ENCODE measurements at regions of chr2 and their contacts with region 1.

Region 1: DNA sequence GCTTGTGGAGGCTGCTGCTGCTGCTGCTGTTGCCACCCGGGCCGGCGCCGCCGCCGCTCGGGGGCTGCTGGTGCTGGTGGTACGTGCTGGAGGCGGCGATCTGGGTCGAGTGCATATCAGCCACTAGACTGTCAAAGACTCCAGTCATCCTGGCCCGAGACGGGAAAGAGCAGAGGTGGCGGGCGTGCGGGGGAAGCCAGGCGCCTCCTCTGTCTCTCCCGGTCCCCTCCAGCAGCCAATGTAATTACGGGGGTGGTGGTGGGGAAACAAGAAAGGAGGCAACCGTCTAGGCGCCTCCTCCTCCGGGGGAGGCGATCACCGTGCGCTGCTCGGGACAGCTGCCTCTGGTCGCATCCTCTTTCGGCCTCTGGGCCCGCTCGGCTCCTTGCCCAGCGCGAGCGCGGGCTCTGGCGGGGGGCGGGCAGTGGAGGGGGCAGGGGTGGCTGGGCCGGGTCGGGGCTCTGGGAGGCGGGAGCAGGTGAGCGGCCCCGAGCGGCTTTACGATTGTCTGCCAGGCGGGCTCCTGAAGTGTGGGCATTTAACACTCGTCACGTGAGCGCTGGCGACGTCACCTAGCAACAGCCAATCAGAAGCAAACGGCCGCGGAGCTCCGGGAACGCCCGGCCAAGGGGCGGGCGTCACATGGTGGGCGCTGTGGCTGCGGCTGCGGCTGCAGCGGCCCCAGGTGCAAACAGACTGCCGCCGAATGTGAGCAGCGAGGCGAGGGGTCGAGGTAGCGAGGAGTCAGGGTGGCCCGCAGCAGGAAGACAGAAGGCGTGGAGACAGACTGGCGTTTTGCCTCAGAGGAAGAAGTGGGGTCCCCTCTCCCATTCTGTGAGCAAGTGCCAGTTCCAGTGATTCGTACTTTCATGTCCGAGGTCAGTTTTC is at the start of gene DLX2:
- DNase-seq: peak; percentile 83
- ATAC-seq: peak; percentile 56
- H3K4me3 Mint-ChIP-seq: peak within 1 kb of the TSS; percentile 77
- H3K27ac Mint-ChIP-seq: peak within 1 kb of the TSS; percentile 73
- H3K4me1 Mint-ChIP-seq: peaks cover 60% of the 10 kb centered on the region
- H3K27me3 Mint-ChIP-seq: peaks cover 65% of the 10 kb centered on the region
- total RNA-seq, gene DLX2: not detected

Region 2: GRCh38 chr2:171598713-171599319 is 503.8 kb before region 1 on chr2:
- CTCF ChIA-PET with region 1: interaction called, 12 read pairs
- POLR2A ChIA-PET with region 1: no interaction called
- DNase-seq: peak; percentile 68
- ATAC-seq: peak; percentile 100
- H3K4me3 Mint-ChIP-seq: no peak overlapping the region
- H3K27ac Mint-ChIP-seq: no peak overlapping the region
- H3K4me1 Mint-ChIP-seq: no peaks in the 10 kb centered on the region
- H3K27me3 Mint-ChIP-seq: peaks cover 11% of the 10 kb centered on the region

Region 3: DNA sequence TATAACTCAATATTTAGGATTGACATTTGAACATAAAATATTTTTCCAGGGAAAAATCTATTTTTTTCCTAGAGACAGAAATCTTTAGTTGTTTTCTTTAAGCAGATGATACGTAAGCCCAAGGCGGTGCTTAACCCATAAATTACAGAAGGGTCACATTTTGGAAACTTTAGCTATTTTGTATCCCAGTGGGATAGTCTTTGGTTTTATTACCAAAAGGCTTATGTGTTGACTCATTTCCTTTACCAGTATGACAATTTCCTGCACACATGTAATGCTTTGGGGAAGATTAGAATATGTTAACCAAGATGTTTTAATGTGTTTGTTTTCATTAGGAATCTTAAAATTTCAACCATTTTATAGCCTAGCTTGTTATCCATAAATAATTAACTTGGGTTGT is 390.6 kb before region 1 on chr2:
- CTCF ChIA-PET with region 1: interaction called, 143 read pairs
- POLR2A ChIA-PET with region 1: interaction called, 4 read pairs
- DNase-seq: no peak
- ATAC-seq: no peak
- H3K4me3 Mint-ChIP-seq: no peak overlapping the region
- H3K27ac Mint-ChIP-seq: no peak overlapping the region
- H3K4me1 Mint-ChIP-seq: peaks cover 10% of the 10 kb centered on the region
- H3K27me3 Mint-ChIP-seq: no peaks in the 10 kb centered on the region

Region 4: DNA sequence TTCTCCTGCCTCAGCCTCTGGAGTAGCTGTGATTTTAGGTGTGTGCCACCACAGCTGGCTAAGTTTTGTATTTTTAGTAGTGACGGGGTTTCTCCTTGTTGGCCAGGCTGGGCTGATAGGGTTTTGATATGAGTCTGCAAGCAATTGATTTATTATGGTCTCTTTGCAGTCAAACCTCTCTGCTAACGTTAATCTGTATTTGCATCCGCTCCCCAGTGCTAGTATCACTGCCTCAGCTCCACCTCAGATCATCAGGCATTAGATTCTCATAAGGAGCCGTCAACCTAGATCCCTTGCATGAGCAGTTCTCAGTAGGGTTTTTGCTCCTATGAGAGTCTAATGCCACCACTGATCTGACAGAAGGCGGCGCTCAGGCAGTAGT is 161.3 kb before region 1 on chr2:
- CTCF ChIA-PET with region 1: interaction called, 13 read pairs
- POLR2A ChIA-PET with region 1: no interaction called
- DNase-seq: no peak
- ATAC-seq: no peak
- H3K4me3 Mint-ChIP-seq: no peak overlapping the region
- H3K27ac Mint-ChIP-seq: no peak overlapping the region
- H3K4me1 Mint-ChIP-seq: peaks cover 16% of the 10 kb centered on the region
- H3K27me3 Mint-ChIP-seq: no peaks in the 10 kb centered on the region

Region 5: DNA sequence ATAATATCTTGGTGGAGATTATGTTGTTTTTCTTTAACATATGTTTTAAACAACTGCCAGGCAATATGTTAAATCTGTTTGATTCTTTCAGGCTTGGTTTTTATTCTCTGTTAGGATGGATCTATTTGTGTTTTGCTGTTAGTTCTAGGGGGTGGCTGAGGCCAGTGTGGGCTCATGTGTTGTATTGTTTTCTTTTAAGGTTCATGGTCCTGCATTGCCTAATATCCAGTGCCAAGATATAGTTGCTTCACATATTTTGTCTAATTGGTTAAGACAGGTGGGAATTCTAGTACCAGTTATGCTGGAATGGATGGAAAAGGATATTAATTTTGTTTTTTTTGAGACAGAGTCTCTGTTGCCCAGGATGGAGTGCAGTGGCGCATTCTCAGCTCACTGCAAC is 95.3 kb before region 1 on chr2:
- CTCF ChIA-PET with region 1: no interaction called
- POLR2A ChIA-PET with region 1: no interaction called
- DNase-seq: no peak
- ATAC-seq: no peak
- H3K4me3 Mint-ChIP-seq: no peak overlapping the region
- H3K27ac Mint-ChIP-seq: no peak overlapping the region
- H3K4me1 Mint-ChIP-seq: peaks cover 29% of the 10 kb centered on the region
- H3K27me3 Mint-ChIP-seq: no peaks in the 10 kb centered on the region

Region 6: GRCh38 chr2:172084734-172085459 is 17.7 kb before region 1 on chr2:
- CTCF ChIA-PET with region 1: interaction called, 51 read pairs
- POLR2A ChIA-PET with region 1: interaction called, 3 read pairs
- DNase-seq: peak; percentile 72
- ATAC-seq: peak; percentile 80
- H3K4me3 Mint-ChIP-seq: peak overlapping the region; percentile 67
- H3K27ac Mint-ChIP-seq: no peak overlapping the region
- H3K4me1 Mint-ChIP-seq: peaks cover 68% of the 10 kb centered on the region
- H3K27me3 Mint-ChIP-seq: peaks cover 94% of the 10 kb centered on the region

Region 7: GRCh38 chr2:172113617-172114016 is 11.0 kb after region 1 on chr2:
- CTCF ChIA-PET with region 1: interaction called, 21 read pairs
- POLR2A ChIA-PET with region 1: no interaction called
- DNase-seq: no peak
- ATAC-seq: no peak
- H3K4me3 Mint-ChIP-seq: no peak overlapping the region
- H3K27ac Mint-ChIP-seq: no peak overlapping the region
- H3K4me1 Mint-ChIP-seq: no peaks in the 10 kb centered on the region
- H3K27me3 Mint-ChIP-seq: peaks cover 37% of the 10 kb centered on the region

Measured in activated CD8-positive, alpha-beta T cell treated with anti-CD3 and anti-CD28 coated beads, Interleukin-2, amount 10 ng/mL, durations not matched to agents 7 days and 5 days (primary cell).